ENCODE measurements at regions of chr20 and their contacts with region 1.

Region 1: DNA sequence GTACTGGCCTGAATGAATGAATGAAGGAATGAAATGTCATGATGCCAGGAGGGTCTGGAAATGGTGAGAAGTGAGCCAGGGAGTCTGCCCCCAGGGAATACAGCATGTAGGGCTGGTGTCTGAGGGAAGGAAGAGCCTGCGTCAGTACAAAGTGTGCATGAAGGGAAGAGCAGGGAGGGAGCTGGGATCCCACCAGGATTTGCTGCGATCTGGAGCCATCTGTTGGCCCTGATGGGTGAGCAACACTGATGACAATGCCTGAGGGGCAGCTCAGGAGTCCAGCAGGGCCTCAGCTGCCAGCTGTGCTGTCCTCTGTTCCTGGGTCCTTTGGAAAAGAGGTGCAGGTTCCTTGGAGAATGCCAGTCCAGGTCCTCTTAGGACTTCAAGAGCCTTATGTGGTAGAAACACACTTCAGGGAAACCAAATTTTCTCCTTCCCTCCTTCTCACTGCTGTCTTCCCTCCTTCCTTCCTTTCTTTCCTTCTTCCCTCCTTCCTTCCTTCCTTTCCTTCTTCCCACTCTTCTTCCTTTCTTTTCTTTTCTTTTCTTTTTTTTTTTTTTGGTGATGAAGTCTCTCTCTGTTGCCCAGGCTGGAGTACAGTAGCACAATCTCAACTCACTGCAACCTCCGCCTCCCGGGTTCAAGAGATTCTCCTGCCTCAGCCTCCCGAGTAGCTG is 11.5 kb downstream of the BPI start:
- DNase-seq: no peak
- H3K4me3 ChIP-seq: no peak overlapping the region
- H3K27ac ChIP-seq: no peak overlapping the region
- H3K4me1 ChIP-seq: no peaks in the 10 kb centered on the region
- H3K27me3 ChIP-seq: peaks cover 2 to 6% of the 10 kb centered on the region in 2 experiments
- CTCF ChIP-seq: peak in 1 of 2 donors; percentile 7
- POLR2A ChIP-seq: no peak

Region 2: GRCh38 chr20:38304845-38305447 is 10.5 kb before region 1 on chr20:
- CTCF ChIA-PET with region 1: interaction called, 10 read pairs
- POLR2A ChIA-PET with region 1: no interaction called
- dilution Hi-C with region 1: no loop called
- intact Hi-C with region 1: no loop called
- DNase-seq: peak; percentile 30
- H3K4me3 ChIP-seq: no peak overlapping the region
- H3K27ac ChIP-seq: no peak overlapping the region
- H3K4me1 ChIP-seq: no peaks in the 10 kb centered on the region
- H3K27me3 ChIP-seq: peaks cover 2% of the 10 kb centered on the region in 2 experiments
- CTCF ChIP-seq: peak; percentile 40 to 70
- POLR2A ChIP-seq: no peak

Region 3: DNA sequence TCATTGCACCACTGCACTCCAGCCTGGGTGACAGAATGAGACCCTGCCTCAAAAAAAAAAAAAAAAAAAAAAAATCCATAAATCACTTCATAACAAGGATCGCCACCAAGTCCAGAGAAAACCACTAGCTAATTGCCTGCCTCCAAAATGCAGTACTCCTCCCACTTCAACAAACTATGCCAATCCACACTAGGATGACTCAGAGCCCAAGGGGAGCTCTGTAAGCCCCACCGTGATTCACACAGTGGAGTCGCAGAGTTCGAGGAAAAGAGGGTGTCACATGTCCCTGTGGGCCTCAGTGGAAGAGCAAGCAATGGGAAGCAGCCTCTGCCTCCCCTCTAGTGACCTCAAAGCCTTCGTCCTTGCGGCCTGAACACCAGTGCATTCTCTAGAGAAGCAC is 110.6 kb after region 1 on chr20:
- CTCF ChIA-PET with region 1: no interaction called
- POLR2A ChIA-PET with region 1: no interaction called
- dilution Hi-C with region 1: no loop called
- intact Hi-C with region 1: no loop called
- DNase-seq: no peak
- H3K4me3 ChIP-seq: no peak overlapping the region
- H3K27ac ChIP-seq: no peak overlapping the region
- H3K4me1 ChIP-seq: peaks cover 10% of the 10 kb centered on the region
- H3K27me3 ChIP-seq: no peaks in the 10 kb centered on the region
- CTCF ChIP-seq: no peak
- POLR2A ChIP-seq: no peak